T-cell (primary cell): ENCODE measurements at regions of chr5 and their contacts with region 1.

Region 1: DNA sequence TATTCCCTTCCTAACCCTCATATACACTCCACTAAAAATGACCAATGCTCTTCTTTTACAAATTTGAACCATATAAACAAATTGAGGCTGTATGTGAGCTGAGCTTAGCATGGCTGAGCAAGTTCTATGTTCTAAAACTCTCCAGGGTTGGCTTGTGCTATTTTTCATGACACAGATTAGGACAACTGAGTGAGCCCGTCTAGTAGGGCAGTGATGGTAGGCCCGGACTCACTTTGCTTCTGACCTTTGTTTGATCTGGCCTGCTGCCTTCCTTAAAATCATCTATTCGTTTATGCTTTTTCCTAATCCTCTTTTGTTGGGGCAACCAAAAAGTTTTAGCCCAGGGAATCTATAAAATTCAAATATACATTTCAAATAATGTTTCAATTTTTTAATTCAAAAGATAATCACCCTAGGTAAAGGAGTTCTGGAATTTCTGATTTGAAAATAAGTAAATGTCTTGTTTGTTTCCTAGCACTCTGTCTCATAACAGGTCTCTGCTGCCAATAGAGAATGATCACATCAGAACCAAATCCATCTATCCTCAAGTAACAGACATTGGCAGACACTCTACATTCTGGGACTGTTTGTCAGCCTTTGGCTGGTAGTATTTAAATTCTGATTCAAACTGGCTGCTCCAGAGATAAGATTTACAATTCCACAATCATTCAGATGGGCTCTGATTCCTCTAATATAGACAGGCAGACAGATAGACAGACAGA is 217.0 kb upstream of the TARS1 start:
- DNase-seq: no peak
- ATAC-seq: no peak
- H3K4me3 ChIP-seq: no peak overlapping the region
- H3K4me3 Mint-ChIP-seq: no peak overlapping the region
- H3K27ac ChIP-seq: no peak overlapping the region
- H3K27ac Mint-ChIP-seq: no peak overlapping the region
- H3K4me1 ChIP-seq: no peaks in the 10 kb centered on the region
- H3K4me1 Mint-ChIP-seq: no peaks in the 10 kb centered on the region
- H3K27me3 ChIP-seq: no peaks in the 10 kb centered on the region
- H3K27me3 Mint-ChIP-seq: no peaks in the 10 kb centered on the region

Region 2: DNA sequence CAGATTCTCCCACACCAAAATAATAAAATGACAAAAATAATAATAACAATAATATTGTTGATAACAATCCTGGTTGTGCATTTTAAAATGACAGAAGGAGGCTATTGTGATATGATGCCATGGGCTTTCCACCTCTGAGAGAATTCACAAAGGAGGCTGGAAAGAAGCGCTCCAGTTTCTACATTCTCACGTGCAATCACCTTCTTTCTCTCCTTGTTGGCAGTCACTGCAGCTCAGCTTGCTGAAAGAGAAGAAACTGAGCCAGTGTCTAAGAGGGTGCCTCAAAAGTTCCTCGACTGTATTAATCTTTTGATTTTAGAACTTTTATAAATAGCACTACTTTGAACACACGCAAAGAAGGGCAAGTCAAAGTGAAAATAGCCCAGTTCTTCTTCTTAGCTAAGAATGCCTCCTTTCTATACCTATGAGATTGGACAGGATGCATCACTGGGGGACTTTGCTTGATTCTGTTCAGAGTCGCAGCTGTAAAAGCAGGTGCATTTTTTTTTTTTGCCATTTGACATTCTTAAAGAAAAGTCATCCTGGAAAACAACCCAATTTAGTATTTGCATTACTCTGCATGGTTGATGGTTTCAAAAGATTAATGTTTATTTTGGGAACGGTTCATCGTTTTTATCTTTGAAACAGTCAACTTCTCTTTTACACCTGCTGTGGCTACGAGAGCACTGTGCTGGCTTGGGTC is 650.8 kb before region 1 on chr5:
- CTCF ChIA-PET with region 1: no interaction called
- POLR2A ChIA-PET with region 1: no interaction called
- DNase-seq: no peak
- ATAC-seq: no peak
- H3K4me3 ChIP-seq: no peak overlapping the region
- H3K4me3 Mint-ChIP-seq: no peak overlapping the region
- H3K27ac ChIP-seq: no peak overlapping the region
- H3K27ac Mint-ChIP-seq: no peak overlapping the region
- H3K4me1 ChIP-seq: peaks cover 0 to 7% of the 10 kb centered on the region in 2 experiments
- H3K4me1 Mint-ChIP-seq: no peaks in the 10 kb centered on the region
- H3K27me3 ChIP-seq: no peaks in the 10 kb centered on the region
- H3K27me3 Mint-ChIP-seq: no peaks in the 10 kb centered on the region

Region 3: GRCh38 chr5:33008751-33009418 is 214.8 kb before region 1 on chr5:
- CTCF ChIA-PET with region 1: interaction called in 1 of 2 experiments, 17 read pairs
- POLR2A ChIA-PET with region 1: no interaction called
- DNase-seq: no peak
- ATAC-seq: no peak
- H3K4me3 ChIP-seq: no peak overlapping the region
- H3K4me3 Mint-ChIP-seq: no peak overlapping the region
- H3K27ac ChIP-seq: no peak overlapping the region
- H3K27ac Mint-ChIP-seq: no peak overlapping the region
- H3K4me1 ChIP-seq: no peaks in the 10 kb centered on the region
- H3K4me1 Mint-ChIP-seq: no peaks in the 10 kb centered on the region
- H3K27me3 ChIP-seq: no peaks in the 10 kb centered on the region
- H3K27me3 Mint-ChIP-seq: no peaks in the 10 kb centered on the region